ENCODE measurements at regions of chr11 and their contacts with region 1.

Region 1: DNA sequence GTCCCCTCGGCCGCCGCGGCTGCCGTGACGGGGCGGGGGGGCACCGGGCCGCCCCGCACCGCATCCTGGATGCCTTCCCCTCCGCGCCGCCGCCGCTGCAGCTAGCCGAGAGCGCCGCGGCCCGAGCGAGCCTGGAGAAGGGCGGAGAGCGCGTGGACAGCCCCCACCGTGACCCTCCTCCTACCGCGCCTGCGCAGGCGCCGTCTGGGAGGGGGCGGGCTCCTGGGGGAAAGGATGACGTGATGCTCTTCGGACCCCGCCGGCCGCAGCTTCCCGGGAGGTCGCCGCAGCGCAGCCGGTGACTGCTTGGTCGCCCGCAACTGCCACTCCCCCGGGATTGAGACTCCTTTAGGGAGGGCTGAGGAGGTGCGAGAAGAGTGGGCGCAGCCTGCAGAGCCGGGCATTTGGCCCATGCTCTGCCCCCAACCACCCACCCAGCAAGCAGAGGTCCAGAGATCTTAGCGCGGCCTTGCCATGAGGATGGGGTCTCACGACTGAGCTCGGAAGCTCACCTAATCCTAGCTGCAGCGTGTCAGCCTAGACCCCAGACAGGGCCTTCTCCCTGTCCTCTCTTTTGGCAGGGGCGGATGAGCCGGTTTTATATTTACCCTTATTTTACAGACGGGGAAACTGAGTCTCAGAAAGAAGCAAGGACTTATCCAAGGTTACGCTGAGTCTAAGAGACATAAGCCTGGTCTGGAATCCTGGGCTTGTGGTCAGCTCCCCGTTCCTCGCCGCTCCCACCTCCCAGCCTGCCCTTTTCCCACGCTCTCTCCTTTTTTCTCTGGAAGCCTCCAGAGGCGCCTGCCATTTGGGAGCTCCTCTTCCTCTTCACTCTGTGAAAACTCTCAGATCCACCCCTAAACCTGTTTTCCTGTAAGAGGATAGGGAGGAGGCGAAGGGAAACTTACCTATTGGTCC is at the start of gene DENND5A:
- DNase-seq: peak; percentile 92 to 100 (median 99)
- ATAC-seq: peak; percentile 88
- H3K4me3 ChIP-seq: peak within 1 kb of the TSS; percentile 93
- H3K27ac ChIP-seq: peak within 1 kb of the TSS; percentile 95
- H3K4me1 ChIP-seq: peaks cover 5 to 24% of the 10 kb centered on the region in 2 experiments; a peak in 4 of 5 replicates
- H3K27me3 ChIP-seq: no peaks in the 10 kb centered on the region
- CTCF ChIP-seq: peak in 2 of 3 experiments; percentile 29 to 34; a peak in 3 of 6 replicates
- EP300 ChIP-seq: no peak
- POLR2A ChIP-seq: peak; percentile 64
- RAD21 ChIP-seq: peak in 1 of 2 experiments; percentile 36; a peak in 2 of 4 replicates
- polyA plus RNA-seq, gene DENND5A: 11.7 to 12.3 TPM

Region 2: DNA sequence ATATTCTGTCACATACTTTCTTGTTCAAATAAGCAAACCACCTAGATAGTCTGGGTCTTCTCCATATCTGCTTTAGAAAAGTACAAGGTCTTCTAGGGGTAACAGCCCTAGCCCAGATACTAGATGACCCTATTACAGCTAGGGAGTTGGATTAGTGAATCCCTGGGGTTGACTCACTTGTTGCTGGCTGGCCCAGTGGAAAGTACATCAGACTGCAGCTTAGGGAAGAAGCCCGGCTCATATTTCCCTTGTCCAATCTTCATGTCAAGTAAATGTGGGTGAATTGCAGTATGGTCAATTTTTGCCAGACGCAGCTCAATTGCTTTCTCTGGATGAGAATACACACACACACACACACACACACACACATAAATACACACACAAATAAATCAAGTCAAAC is 95.0 kb before region 1 on chr11:
- CTCF ChIA-PET with region 1: no interaction called
- POLR2A ChIA-PET with region 1: interaction called, 4 read pairs
- in situ Hi-C with region 1: no loop called
- intact Hi-C with region 1: loop called (anchors 5 kb)
- DNase-seq: no peak
- ATAC-seq: no peak
- H3K4me3 ChIP-seq: no peak overlapping the region
- H3K27ac ChIP-seq: no peak overlapping the region; the same call in 2 of the 3 replicates
- H3K4me1 ChIP-seq: peaks cover 0 to 7% of the 10 kb centered on the region in 2 experiments; a peak in 3 of 5 replicates
- H3K27me3 ChIP-seq: no peaks in the 10 kb centered on the region
- CTCF ChIP-seq: no peak
- EP300 ChIP-seq: no peak
- POLR2A ChIP-seq: no peak
- RAD21 ChIP-seq: no peak

Region 3: DNA sequence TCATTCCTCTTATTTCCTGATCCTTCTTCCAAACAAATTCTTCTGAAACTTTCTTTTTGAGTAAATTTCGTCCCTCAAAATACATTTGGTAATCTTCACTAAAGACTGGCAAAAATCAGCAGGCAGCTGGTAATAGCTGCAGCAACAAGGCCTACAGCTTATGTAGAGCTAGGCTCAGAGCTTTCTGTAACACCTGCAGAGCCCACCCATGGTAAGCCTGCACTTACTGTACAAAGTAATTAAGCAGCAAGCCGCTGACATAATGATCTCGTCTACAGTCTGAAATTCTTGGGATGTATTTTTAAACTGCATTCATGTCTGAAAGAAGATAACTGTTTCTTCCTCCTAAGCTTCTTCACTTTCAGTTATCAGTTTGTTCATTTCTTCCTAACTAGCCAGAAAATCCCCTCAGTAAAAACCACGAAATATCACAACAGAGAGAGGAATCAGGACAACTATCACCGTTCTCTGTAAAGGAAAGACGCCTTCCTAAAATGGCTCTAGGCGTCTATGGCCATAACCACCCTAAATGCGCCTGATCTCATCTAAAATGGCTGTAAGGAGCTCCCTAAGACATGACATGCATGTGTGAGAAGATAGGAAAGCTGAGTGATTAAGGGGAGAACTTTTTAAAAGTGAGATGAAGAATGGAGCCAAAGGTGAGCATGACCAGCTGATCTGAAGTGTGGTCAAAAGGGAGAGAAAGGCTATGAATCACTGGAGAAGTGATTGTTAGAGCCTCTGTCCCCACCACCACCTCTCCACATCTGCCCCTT is 56.6 kb before region 1 on chr11:
- CTCF ChIA-PET with region 1: no interaction called
- POLR2A ChIA-PET with region 1: interaction called, 3 read pairs
- in situ Hi-C with region 1: no loop called
- intact Hi-C with region 1: loop called (anchors 5 kb)
- DNase-seq: peak in 2 of 4 experiments; percentile 20 to 42
- ATAC-seq: peak; percentile 80
- H3K4me3 ChIP-seq: no peak overlapping the region
- H3K27ac ChIP-seq: peak overlapping the region; percentile 12; the same call in 2 of the 3 replicates
- H3K4me1 ChIP-seq: peaks cover 3 to 29% of the 10 kb centered on the region in 2 experiments; a peak in 4 of 5 replicates
- H3K27me3 ChIP-seq: no peaks in the 10 kb centered on the region
- CTCF ChIP-seq: no peak
- EP300 ChIP-seq: no peak
- POLR2A ChIP-seq: no peak
- RAD21 ChIP-seq: no peak

Region 4: GRCh38 chr11:9250139-9250582 is 15.3 kb before region 1 on chr11:
- CTCF ChIA-PET with region 1: no interaction called
- POLR2A ChIA-PET with region 1: interaction called, 25 read pairs
- in situ Hi-C with region 1: no loop called
- intact Hi-C with region 1: loop called (anchors 2 kb)
- DNase-seq: peak in 3 of 4 experiments; percentile 21 to 41 (median 39)
- ATAC-seq: peak; percentile 77
- H3K4me3 ChIP-seq: no peak overlapping the region
- H3K27ac ChIP-seq: peak overlapping the region; percentile 40; the same call in 1 of the 3 replicates
- H3K4me1 ChIP-seq: peaks cover 3 to 7% of the 10 kb centered on the region in 2 experiments; a peak in 4 of 5 replicates
- H3K27me3 ChIP-seq: no peaks in the 10 kb centered on the region
- CTCF ChIP-seq: no peak
- EP300 ChIP-seq: no peak
- POLR2A ChIP-seq: no peak
- RAD21 ChIP-seq: no peak

Region 5: DNA sequence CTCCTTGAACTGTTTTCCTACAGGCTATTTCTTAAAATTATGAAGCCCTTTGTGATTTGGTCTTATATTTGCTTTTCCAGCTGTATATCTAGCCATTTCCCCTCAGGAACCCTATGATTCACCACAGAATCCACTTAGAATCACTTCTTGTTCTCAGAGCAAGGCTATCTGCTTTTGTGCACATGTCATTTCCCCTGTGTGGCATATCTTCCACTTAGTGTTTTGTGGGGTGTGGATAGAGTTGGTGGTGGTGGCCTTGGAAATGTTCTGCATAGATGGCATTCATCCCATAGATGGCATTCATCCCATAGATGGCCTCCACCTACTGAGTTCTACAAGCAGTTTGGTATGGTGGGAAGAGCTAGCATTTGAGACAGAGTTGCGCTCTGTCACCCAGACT is 443.1 kb after region 1 on chr11:
- CTCF ChIA-PET with region 1: no interaction called
- POLR2A ChIA-PET with region 1: no interaction called
- in situ Hi-C with region 1: no loop called
- intact Hi-C with region 1: no loop called
- DNase-seq: no peak
- ATAC-seq: no peak
- H3K4me3 ChIP-seq: no peak overlapping the region
- H3K27ac ChIP-seq: no peak overlapping the region
- H3K4me1 ChIP-seq: no peaks in the 10 kb centered on the region; a peak in 1 of 5 replicates
- H3K27me3 ChIP-seq: no peaks in the 10 kb centered on the region; a peak in 1 of 5 replicates
- CTCF ChIP-seq: no peak
- EP300 ChIP-seq: no peak
- POLR2A ChIP-seq: no peak
- RAD21 ChIP-seq: no peak

Measured in K562 (cell line).